ENCODE measurements at regions of chr13 and their contacts with region 1.

Region 1: DNA sequence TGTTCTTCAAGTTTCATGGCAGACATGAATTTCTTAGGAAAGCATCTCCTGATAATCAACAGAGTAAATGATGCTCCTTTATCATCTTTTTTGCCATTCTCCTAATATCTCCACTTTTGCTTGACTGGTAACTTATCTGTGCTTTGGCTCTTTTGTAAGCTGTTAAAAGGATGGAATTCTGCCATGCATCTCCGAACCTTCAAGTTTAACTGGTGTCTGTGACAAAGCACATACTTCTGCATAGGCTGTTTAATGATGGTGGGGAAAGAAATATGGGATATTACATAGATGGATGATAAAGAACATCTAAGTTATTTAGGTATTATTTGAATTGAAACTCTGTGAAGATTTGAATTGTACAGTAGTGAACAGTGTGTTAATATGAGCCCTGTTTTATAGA is 866.9 kb upstream of the SLITRK1 start:
- DNase-seq: no peak
- H3K4me3 ChIP-seq: no peak overlapping the region
- H3K27ac ChIP-seq: no peak overlapping the region
- H3K4me1 ChIP-seq: no peaks in the 10 kb centered on the region
- H3K27me3 ChIP-seq: no peaks in the 10 kb centered on the region
- CTCF ChIP-seq: no peak
- EP300 ChIP-seq: no peak
- POLR2A ChIP-seq: no peak

Region 2: GRCh38 chr13:83618966-83619365 is 1130.2 kb before region 1 on chr13:
- in situ Hi-C with region 1: no loop called
- intact Hi-C with region 1: loop called (anchors 5 kb)
- DNase-seq: no peak
- H3K4me3 ChIP-seq: no peak overlapping the region
- H3K27ac ChIP-seq: no peak overlapping the region
- H3K4me1 ChIP-seq: no peaks in the 10 kb centered on the region
- H3K27me3 ChIP-seq: no peaks in the 10 kb centered on the region
- CTCF ChIP-seq: no peak
- EP300 ChIP-seq: no peak
- POLR2A ChIP-seq: no peak